Activated naive CD4-positive, alpha-beta T cell treated with anti-CD3 and anti-CD28 coated beads, Interleukin-2, amount 10 ng/mL, durations not matched to agents 7 days and 5 days (primary cell): ENCODE measurements at regions of chr6 and their contacts with region 1.

Region 1: DNA sequence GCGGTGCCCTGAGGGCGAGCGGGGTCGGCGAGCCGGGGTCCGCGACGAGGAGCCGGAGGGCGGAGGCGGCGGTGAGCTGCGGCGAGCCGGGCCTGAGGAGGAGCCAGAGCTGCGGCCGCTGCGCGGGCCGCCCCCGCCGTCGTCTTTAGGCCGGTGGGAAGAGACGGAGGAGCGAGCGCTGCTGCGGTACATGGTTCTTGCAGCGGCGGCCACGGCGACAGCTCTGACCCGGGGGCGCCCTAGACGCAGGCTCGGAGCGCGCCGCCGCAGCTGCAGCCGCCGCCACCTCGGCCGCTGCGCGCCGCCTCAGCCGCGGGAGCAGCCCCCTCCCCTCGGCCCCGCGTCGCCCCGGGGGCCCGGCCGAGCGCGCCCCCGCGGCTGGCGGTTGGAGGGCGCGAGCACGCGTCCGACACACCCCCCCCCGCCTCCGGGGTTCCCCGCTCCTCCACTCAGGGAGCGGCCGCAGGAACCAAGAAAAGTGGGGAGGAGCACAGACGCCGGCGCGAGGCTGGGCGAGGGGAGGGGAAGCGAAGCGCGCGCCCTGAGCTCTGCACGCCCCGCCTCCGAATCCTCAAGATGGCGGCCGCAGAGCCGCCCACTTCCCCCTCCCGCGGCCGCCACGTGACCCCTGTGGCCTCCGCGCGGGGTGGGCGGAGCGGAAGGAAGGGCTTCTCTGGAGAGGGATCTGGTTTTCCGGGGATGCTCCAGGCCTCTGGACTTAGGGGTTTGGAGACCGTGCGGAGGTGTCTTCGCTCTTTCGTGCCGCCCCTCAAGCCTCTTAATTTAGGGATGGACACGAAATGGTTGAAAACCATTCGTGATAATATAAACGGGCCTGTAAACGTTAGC is at the start of gene ZNF318:
- DNase-seq: peak; percentile 95
- H3K4me3 Mint-ChIP-seq: peak within 1 kb of the TSS; percentile 87
- H3K27ac Mint-ChIP-seq: peak within 1 kb of the TSS; percentile 88
- H3K4me1 Mint-ChIP-seq: peaks cover 44% of the 10 kb centered on the region
- H3K27me3 Mint-ChIP-seq: peaks cover 30% of the 10 kb centered on the region

Region 2: GRCh38 chr6:43383021-43383667 is 13.7 kb after region 1 on chr6:
- CTCF ChIA-PET with region 1: interaction called, 13 read pairs
- DNase-seq: no peak
- H3K4me3 Mint-ChIP-seq: peak overlapping the region; percentile 16
- H3K27ac Mint-ChIP-seq: peak overlapping the region; percentile 97
- H3K4me1 Mint-ChIP-seq: peaks cover 58% of the 10 kb centered on the region
- H3K27me3 Mint-ChIP-seq: peaks cover 57% of the 10 kb centered on the region